ENCODE measurements at regions of chr9 and their contacts with region 1.

Region 1: GRCh38 chr9:20622330-20623020 is at the start of gene MLLT3:
- DNase-seq: peak; percentile 96 to 98
- ATAC-seq: peak; percentile 93 to 99 (median 96)
- H3K4me3 ChIP-seq: peak within 1 kb of the TSS; percentile 66 to 94 (median 88)
- H3K27ac ChIP-seq: peak within 1 kb of the TSS; percentile 82 to 92 (median 85)
- H3K4me1 ChIP-seq: peaks cover 0 to 40% (median 33%) of the 10 kb centered on the region in 9 donors
- H3K27me3 ChIP-seq: peaks cover 0 to 7% (median 0%) of the 10 kb centered on the region in 7 donors
- CTCF ChIP-seq: peak in 5 of 9 donors; percentile 7 to 42 (median 35)
- total RNA-seq, gene MLLT3: 6.3 to 22.7 (median 14.7) TPM

Region 2: GRCh38 chr9:19934301-19934868 is 688.1 kb before region 1 on chr9:
- intact Hi-C with region 1: loop called in 7 of 10 experiments (anchors 5 to 10 kb)
- DNase-seq: peak; percentile 26 to 34
- ATAC-seq: peak; percentile 38 to 75 (median 66)
- H3K4me3 ChIP-seq: peak overlapping the region; percentile 15 to 67 (median 56)
- H3K27ac ChIP-seq: peak overlapping the region in 3 of 10 donors; percentile 37 to 62 (median 37)
- H3K4me1 ChIP-seq: peaks cover 0 to 12% (median 0%) of the 10 kb centered on the region in 9 donors
- H3K27me3 ChIP-seq: peaks cover 0 to 8% (median 0%) of the 10 kb centered on the region in 7 donors
- CTCF ChIP-seq: peak in 3 of 9 donors; percentile 14 to 17 (median 16)

Region 3: GRCh38 chr9:20369391-20369790 is 253.1 kb before region 1 on chr9:
- intact Hi-C with region 1: loop called in 1 of 10 experiments (anchors 5 kb)
- DNase-seq: no peak
- ATAC-seq: no peak
- H3K4me3 ChIP-seq: no peak overlapping the region
- H3K27ac ChIP-seq: no peak overlapping the region
- H3K4me1 ChIP-seq: peaks cover 0 to 4% (median 0%) of the 10 kb centered on the region in 9 donors
- H3K27me3 ChIP-seq: no peaks in the 10 kb centered on the region
- CTCF ChIP-seq: peak in 3 of 9 donors; percentile 9 to 18 (median 11)

Region 4: GRCh38 chr9:20558566-20559016 is 63.9 kb before region 1 on chr9:
- intact Hi-C with region 1: loop called in 6 of 10 experiments (anchors 2 to 10 kb)
- DNase-seq: no peak
- ATAC-seq: peak in 3 of 8 donors; percentile 26 to 44 (median 33)
- H3K4me3 ChIP-seq: no peak overlapping the region
- H3K27ac ChIP-seq: no peak overlapping the region
- H3K4me1 ChIP-seq: peaks cover 3 to 59% (median 25%) of the 10 kb centered on the region in 9 donors
- H3K27me3 ChIP-seq: no peaks in the 10 kb centered on the region
- CTCF ChIP-seq: no peak

Region 5: DNA sequence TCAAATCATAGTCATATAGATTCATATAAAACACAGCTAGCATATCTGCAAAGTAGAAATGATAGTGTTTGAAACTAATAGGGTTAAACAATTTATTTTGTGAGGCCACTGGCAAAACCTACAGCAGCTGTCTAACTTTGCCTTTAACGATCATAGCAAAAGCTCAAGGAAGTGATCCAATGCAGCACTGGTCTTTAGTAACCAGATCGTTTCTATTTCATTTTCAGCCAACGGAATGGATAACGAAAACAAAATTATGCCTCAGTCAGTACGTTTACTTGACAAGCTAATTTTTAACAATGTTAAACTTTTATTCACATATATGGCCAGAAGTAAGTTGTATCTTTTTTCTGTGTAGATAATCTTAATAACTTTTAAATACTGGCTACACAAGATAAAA is 17.9 kb before region 1 on chr9:
- intact Hi-C with region 1: no loop called
- DNase-seq: no peak
- ATAC-seq: peak in 5 of 8 donors; percentile 51 to 67 (median 63)
- H3K4me3 ChIP-seq: peak overlapping the region in 7 of 10 donors; percentile 7 to 40 (median 29)
- H3K27ac ChIP-seq: peak overlapping the region in 8 of 10 donors; percentile 5 to 72 (median 31)
- H3K4me1 ChIP-seq: peaks cover 2 to 56% (median 46%) of the 10 kb centered on the region in 9 donors
- H3K27me3 ChIP-seq: no peaks in the 10 kb centered on the region
- CTCF ChIP-seq: no peak

Region 6: DNA sequence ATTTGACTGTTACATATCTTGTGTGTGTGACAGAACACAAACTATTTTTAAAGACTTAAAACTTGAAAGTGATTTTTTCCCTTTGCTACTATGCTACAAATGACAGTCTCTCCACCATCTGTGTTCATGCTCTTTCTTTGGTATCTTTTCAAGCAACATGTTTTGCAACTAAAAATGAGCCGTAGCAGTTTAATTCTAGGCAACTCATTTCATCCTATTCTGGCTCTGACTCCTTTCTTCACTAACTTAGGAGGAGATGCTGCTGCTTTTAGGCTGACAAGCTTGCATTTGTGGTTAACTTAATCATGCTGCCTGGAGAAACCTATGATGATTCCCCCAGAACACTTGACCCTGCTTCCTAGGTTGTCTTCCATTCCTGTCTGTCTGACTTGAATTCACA is 308.4 kb after region 1 on chr9:
- intact Hi-C with region 1: loop called in 2 of 10 experiments (anchors 10 kb)
- DNase-seq: no peak
- ATAC-seq: no peak
- H3K4me3 ChIP-seq: no peak overlapping the region
- H3K27ac ChIP-seq: no peak overlapping the region
- H3K4me1 ChIP-seq: peaks cover 0 to 18% (median 7%) of the 10 kb centered on the region in 9 donors
- H3K27me3 ChIP-seq: no peaks in the 10 kb centered on the region
- CTCF ChIP-seq: no peak